B cell (primary cell): ENCODE measurements at regions of chr5 and their contacts with region 1.

Region 1: DNA sequence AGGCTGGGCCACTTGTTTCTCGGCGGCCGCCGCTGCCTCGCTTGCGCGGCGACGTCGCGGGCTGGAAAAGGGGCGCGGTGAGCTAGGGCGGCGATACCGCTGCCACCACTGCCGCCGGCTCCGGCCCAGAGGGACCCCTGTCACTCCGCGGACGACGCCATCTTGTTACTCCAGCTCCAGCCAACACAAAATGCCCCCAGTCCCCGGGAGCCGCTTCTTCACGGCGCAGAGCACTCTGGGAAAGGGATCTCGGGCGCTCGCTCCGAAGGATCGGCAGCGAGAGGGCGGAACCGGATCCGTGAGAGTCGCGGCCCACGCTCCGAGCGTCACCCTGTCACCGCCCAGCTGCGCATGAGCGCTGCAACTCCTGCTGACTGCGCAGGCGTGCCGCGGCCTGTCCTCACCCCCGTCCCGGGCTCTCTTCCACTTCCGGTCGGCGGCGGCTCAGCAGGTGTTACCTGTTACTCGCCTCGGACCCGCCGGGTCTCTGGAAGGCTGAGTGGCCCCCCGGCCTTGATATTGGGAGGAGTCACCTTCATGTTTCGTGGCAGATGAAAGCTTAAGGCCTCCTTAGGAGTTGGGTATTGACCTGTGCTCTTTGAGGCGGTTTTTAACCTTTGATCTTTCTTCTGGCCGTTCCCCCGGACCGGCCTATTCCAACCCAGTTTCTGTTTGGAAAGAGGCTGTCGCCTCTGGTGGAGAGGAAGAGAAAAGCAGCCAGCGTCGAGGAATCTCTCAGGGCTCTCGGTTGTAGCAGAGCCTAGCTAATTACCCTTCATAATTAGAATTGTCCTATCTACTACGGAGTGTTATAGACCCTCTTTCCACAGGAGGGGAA is at the start of gene CSNK1A1:
- DNase-seq: peak; percentile 99
- ATAC-seq: peak; percentile 84
- H3K4me3 ChIP-seq: peak within 1 kb of the TSS; percentile 93 to 99 (median 97)
- H3K4me3 Mint-ChIP-seq: peak within 1 kb of the TSS; percentile 97
- H3K27ac ChIP-seq: peak within 1 kb of the TSS; percentile 87 to 97
- H3K27ac Mint-ChIP-seq: peak within 1 kb of the TSS; percentile 99
- H3K4me1 ChIP-seq: peaks cover 20 to 27% of the 10 kb centered on the region in 2 donors
- H3K4me1 Mint-ChIP-seq: peaks cover 35% of the 10 kb centered on the region
- H3K27me3 ChIP-seq: no peaks in the 10 kb centered on the region
- H3K27me3 Mint-ChIP-seq: no peaks in the 10 kb centered on the region
- CTCF ChIP-seq: peak; percentile 74
- total RNA-seq, gene CSNK1A1: 168 TPM in 2 replicates

Region 2: DNA sequence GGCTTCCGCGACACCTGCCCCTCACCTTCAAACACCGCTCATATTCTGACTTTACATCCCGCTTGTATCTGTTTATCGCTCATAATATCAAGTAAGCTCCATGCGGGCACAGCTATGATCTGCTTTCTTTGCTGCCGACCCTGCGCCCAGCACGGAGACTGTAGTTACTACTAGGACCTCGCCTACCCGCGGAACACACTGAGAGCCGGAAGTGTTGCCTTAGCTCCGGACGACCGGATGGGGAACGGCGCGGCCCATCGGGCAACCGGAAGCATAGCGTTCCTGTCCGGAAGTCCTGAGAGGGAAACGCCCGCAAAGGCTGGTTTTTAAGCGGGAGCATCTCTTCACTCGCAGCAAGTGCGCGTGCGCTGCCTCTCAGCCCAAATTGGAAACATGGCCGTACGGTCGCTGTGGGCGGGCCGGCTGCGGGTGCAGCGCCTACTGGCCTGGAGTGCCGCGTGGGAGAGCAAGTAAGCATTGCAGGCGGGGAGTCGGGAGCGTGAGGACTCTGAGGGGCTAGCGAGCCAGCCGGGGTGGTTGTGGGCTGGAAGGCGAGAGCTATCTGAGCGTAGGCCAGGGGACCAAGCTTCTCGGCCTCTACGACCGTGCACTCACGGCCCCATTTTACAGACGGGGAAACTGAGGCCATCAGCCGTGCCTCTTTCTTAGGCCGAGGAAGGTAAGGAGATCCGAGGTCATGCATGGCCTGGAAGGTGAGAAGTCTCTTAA is 206.1 kb before region 1 on chr5 and contains the start of gene GRPEL2:
- CTCF ChIA-PET with region 1: interaction called, 5 read pairs
- POLR2A ChIA-PET with region 1: interaction called, 15 read pairs
- intact Hi-C with region 1: loop called (anchors 1 kb)
- DNase-seq: peak; percentile 88
- ATAC-seq: peak; percentile 90
- H3K4me3 ChIP-seq: peak within 1 kb of the TSS; percentile 62 to 88 (median 77)
- H3K4me3 Mint-ChIP-seq: peak within 1 kb of the TSS; percentile 87
- H3K27ac ChIP-seq: peak within 1 kb of the TSS; percentile 53 to 63
- H3K27ac Mint-ChIP-seq: peak within 1 kb of the TSS; percentile 83
- H3K4me1 ChIP-seq: peaks cover 11 to 22% of the 10 kb centered on the region in 2 donors
- H3K4me1 Mint-ChIP-seq: peaks cover 29% of the 10 kb centered on the region
- H3K27me3 ChIP-seq: no peaks in the 10 kb centered on the region
- H3K27me3 Mint-ChIP-seq: no peaks in the 10 kb centered on the region
- CTCF ChIP-seq: no peak
- total RNA-seq, gene GRPEL2: 12.1 and 12.5 TPM in 2 replicates

Region 3: DNA sequence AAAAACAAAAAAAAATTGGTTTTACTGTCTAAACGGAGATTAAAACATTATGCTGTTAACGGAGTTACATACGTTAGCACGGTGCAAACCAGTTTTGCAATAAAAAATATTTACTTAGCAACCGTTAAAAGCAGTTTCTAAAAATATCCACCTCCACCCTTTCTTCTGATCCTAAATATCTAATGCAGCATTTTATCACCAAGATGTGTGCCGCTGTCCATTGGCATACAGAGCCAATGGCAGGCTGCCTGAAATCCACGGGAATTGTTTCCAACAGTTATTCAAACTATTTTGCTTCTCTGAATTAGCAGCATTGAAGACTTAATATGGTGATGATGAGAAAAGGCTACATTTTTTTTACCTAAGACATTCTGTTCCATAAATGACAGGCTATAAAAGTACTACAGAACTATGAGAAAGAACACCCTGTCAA is 61.8 kb before region 1 on chr5:
- CTCF ChIA-PET with region 1: no interaction called
- POLR2A ChIA-PET with region 1: no interaction called
- intact Hi-C with region 1: loop called (anchors 10 kb)
- DNase-seq: no peak
- ATAC-seq: no peak
- H3K4me3 ChIP-seq: no peak overlapping the region
- H3K4me3 Mint-ChIP-seq: no peak overlapping the region
- H3K27ac ChIP-seq: no peak overlapping the region
- H3K27ac Mint-ChIP-seq: no peak overlapping the region
- H3K4me1 ChIP-seq: no peaks in the 10 kb centered on the region
- H3K4me1 Mint-ChIP-seq: peaks cover 2% of the 10 kb centered on the region
- H3K27me3 ChIP-seq: no peaks in the 10 kb centered on the region
- H3K27me3 Mint-ChIP-seq: no peaks in the 10 kb centered on the region
- CTCF ChIP-seq: no peak

Region 4: DNA sequence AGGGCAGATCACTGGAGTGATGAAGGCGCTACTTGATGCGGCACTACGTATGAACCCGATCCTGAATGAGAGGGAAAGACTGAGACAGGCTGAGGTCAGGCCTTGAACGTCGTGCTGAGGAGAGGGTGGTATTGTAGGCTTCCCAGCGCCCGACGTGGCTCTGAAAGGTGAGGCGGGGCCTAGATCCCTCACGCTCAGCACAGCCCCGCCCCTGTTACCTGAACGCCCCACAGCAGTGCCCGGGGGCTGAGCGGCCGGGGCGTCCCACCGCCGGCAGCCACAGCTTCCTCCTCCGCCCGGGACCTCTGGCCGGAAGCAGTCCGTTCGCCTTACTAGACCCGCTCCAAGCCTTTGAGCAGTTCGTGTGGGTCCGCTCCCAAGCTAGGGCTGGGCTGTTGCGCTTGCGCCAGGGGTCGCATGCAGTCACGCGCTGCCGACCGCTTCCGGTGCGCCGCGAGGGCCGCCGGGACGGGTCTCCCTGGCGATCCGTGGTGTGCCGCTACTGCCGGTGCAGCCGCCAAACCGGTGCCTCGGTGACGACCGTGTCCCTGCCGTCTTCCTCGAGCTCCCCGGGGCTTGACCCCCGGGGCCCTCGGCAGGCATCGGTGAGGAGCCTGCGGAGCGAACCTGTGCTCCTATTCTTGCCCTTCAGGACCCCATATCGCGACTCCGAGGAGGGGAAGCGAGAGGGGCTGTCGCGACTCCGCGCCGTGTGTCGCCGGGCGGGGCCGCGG is 449.0 kb after region 1 on chr5 and contains the starts of genes HMGXB3 and TIGD6:
- CTCF ChIA-PET with region 1: interaction called, 3 read pairs
- POLR2A ChIA-PET with region 1: no interaction called
- intact Hi-C with region 1: loop called (anchors 1 kb)
- DNase-seq: peak; percentile 94
- ATAC-seq: peak; percentile 85
- H3K4me3 ChIP-seq: peak within 1 kb of the TSS; percentile 48 to 90 (median 83)
- H3K4me3 Mint-ChIP-seq: peak within 1 kb of the TSS; percentile 89
- H3K27ac ChIP-seq: peak within 1 kb of the TSS; percentile 83 to 87
- H3K27ac Mint-ChIP-seq: peak within 1 kb of the TSS; percentile 96
- H3K4me1 ChIP-seq: peaks cover 21 to 23% of the 10 kb centered on the region in 2 donors
- H3K4me1 Mint-ChIP-seq: peaks cover 37% of the 10 kb centered on the region
- H3K27me3 ChIP-seq: no peaks in the 10 kb centered on the region
- H3K27me3 Mint-ChIP-seq: no peaks in the 10 kb centered on the region
- CTCF ChIP-seq: no peak
- total RNA-seq, gene HMGXB3: 35.7 and 40.7 TPM in 2 replicates
- total RNA-seq, gene TIGD6: 5.4 and 5.9 TPM in 2 replicates

Region 5: GRCh38 chr5:150853561-150853960 is 1302.1 kb after region 1 on chr5:
- CTCF ChIA-PET with region 1: no interaction called
- POLR2A ChIA-PET with region 1: no interaction called
- intact Hi-C with region 1: no loop called
- DNase-seq: peak; percentile 64
- ATAC-seq: peak; percentile 76
- H3K4me3 ChIP-seq: peak overlapping the region in 3 of 5 experiments; percentile 10 to 57 (median 15)
- H3K4me3 Mint-ChIP-seq: peak overlapping the region; percentile 80
- H3K27ac ChIP-seq: peak overlapping the region; percentile 19 to 79
- H3K27ac Mint-ChIP-seq: peak overlapping the region; percentile 85
- H3K4me1 ChIP-seq: peaks cover 3 to 15% of the 10 kb centered on the region in 2 donors
- H3K4me1 Mint-ChIP-seq: peaks cover 14% of the 10 kb centered on the region
- H3K27me3 ChIP-seq: no peaks in the 10 kb centered on the region
- H3K27me3 Mint-ChIP-seq: peaks cover 2% of the 10 kb centered on the region
- CTCF ChIP-seq: no peak